ENCODE measurements at regions of chr6 and their contacts with region 1.

Region 1: DNA sequence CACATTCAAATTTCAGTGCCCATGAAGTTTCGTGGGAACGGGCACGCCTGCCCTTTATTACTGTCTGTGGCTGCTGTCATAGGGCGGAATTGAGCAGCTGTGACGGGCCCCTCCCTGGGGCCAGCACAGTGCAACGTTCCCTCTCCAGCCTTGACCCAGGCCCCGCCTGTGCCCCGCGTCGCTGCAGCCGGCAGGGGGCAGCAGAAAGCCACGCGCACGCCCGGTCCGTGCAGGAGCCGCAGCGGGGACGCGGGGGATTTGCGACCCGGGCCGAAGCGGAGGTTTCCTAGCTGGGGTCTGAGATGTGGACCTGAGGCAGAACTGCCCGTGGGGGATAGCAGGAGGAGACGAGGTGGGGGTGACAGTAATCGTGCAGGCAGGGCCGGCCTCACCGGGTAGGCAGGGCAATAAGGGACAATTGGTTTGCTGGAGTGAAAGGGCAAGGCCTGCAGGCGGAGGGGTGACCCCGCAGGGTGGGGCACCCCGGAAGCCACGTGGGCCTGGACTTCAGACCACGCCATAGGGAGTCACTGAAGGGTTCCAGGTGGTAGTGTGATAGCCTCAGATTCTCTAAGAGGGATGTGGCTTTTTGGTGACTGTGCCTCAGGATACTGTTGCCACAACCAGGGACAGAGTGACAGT is 54.4 kb downstream of the SYTL3 start:
- DNase-seq: peak; percentile 81 to 83 (median 82)
- H3K4me3 ChIP-seq: peak overlapping the region; percentile 20 to 63 (median 36)
- H3K4me3 Mint-ChIP-seq: peak overlapping the region; percentile 83 to 93
- H3K27ac ChIP-seq: peak overlapping the region; percentile 15 to 35
- H3K27ac Mint-ChIP-seq: peak overlapping the region; percentile 66 to 93 (median 85)
- H3K4me1 ChIP-seq: peaks cover 9 to 10% of the 10 kb centered on the region in 2 donors
- H3K4me1 Mint-ChIP-seq: peaks cover 18% of the 10 kb centered on the region
- H3K27me3 ChIP-seq: no peaks in the 10 kb centered on the region
- H3K27me3 Mint-ChIP-seq: peaks cover 0 to 3% (median 0%) of the 10 kb centered on the region in 3 donors
- CTCF ChIP-seq: peak; percentile 99

Region 2: GRCh38 chr6:158744986-158745430 is 40.7 kb after region 1 on chr6:
- intact Hi-C with region 1: loop called in 1 of 2 experiments (anchors 5 kb)
- DNase-seq: no peak
- H3K4me3 ChIP-seq: no peak overlapping the region
- H3K4me3 Mint-ChIP-seq: no peak overlapping the region
- H3K27ac ChIP-seq: no peak overlapping the region
- H3K27ac Mint-ChIP-seq: peak overlapping the region in 1 of 7 donors; percentile 1
- H3K4me1 ChIP-seq: no peaks in the 10 kb centered on the region
- H3K4me1 Mint-ChIP-seq: no peaks in the 10 kb centered on the region
- H3K27me3 ChIP-seq: no peaks in the 10 kb centered on the region
- H3K27me3 Mint-ChIP-seq: peaks cover 1 to 4% (median 3%) of the 10 kb centered on the region in 3 donors
- CTCF ChIP-seq: no peak

Region 3: GRCh38 chr6:158758451-158758861 is 54.2 kb after region 1 on chr6:
- intact Hi-C with region 1: loop called in 1 of 2 experiments (anchors 5 kb)
- DNase-seq: no peak
- H3K4me3 ChIP-seq: no peak overlapping the region
- H3K4me3 Mint-ChIP-seq: no peak overlapping the region
- H3K27ac ChIP-seq: no peak overlapping the region
- H3K27ac Mint-ChIP-seq: peak overlapping the region in 1 of 7 donors; percentile 15
- H3K4me1 ChIP-seq: no peaks in the 10 kb centered on the region
- H3K4me1 Mint-ChIP-seq: peaks cover 2% of the 10 kb centered on the region
- H3K27me3 ChIP-seq: no peaks in the 10 kb centered on the region
- H3K27me3 Mint-ChIP-seq: no peaks in the 10 kb centered on the region
- CTCF ChIP-seq: no peak

Region 4: GRCh38 chr6:158769771-158770432 is 65.6 kb after region 1 on chr6:
- intact Hi-C with region 1: loop called in 1 of 2 experiments (anchors 10 kb)
- DNase-seq: no peak
- H3K4me3 ChIP-seq: no peak overlapping the region
- H3K4me3 Mint-ChIP-seq: no peak overlapping the region
- H3K27ac ChIP-seq: peak overlapping the region in 1 of 2 donors; percentile 0
- H3K27ac Mint-ChIP-seq: peak overlapping the region in 3 of 7 donors; percentile 3 to 76 (median 52)
- H3K4me1 ChIP-seq: no peaks in the 10 kb centered on the region
- H3K4me1 Mint-ChIP-seq: peaks cover 3% of the 10 kb centered on the region
- H3K27me3 ChIP-seq: no peaks in the 10 kb centered on the region
- H3K27me3 Mint-ChIP-seq: peaks cover 0 to 2% (median 0%) of the 10 kb centered on the region in 3 donors
- CTCF ChIP-seq: no peak

Region 5: GRCh38 chr6:158972241-158973233 is 268.2 kb after region 1 on chr6:
- intact Hi-C with region 1: loop called (anchors 1 to 5 kb)
- DNase-seq: peak; percentile 29 to 61 (median 42)
- H3K4me3 ChIP-seq: no peak overlapping the region
- H3K4me3 Mint-ChIP-seq: no peak overlapping the region
- H3K27ac ChIP-seq: no peak overlapping the region
- H3K27ac Mint-ChIP-seq: no peak overlapping the region
- H3K4me1 ChIP-seq: peaks cover 2 to 3% of the 10 kb centered on the region in 2 donors
- H3K4me1 Mint-ChIP-seq: peaks cover 4% of the 10 kb centered on the region
- H3K27me3 ChIP-seq: no peaks in the 10 kb centered on the region
- H3K27me3 Mint-ChIP-seq: no peaks in the 10 kb centered on the region
- CTCF ChIP-seq: peak; percentile 79

Region 6: DNA sequence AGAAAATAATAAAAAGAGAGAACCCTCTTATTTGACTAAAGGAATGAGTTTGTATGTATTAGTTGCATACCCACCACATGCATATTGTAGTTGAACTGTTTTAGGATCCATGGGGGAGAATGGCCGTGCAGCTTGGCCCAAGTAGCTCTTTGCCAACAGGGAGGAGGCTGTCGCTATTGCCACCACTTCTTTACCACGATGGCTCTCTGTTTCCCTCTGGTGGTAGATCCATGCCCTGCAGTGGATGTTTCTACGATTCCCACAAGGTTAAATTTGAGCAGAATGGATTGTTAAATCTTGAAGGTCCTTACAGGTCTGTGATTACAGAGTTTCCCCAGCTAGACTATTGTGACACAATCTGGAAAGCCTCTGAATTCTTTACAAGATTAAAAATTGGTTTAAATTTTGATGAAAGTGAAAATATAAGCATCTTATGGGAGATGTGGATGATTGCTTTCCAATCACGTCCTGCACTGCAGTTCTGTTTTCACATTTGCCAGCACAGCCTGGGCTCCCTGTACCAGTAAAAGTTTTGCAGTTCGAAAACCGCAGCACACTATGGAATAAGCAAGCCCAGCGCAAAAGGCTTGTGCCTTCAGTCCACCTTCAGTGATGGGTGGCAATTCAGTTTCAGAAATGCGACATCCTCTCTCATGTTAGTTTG is 430.5 kb after region 1 on chr6:
- intact Hi-C with region 1: loop called in 1 of 2 experiments (anchors 10 kb)
- DNase-seq: peak; percentile 65 to 82 (median 79)
- H3K4me3 ChIP-seq: no peak overlapping the region
- H3K4me3 Mint-ChIP-seq: no peak overlapping the region
- H3K27ac ChIP-seq: no peak overlapping the region
- H3K27ac Mint-ChIP-seq: peak overlapping the region in 1 of 7 donors; percentile 46
- H3K4me1 ChIP-seq: peaks cover 3 to 4% of the 10 kb centered on the region in 2 donors
- H3K4me1 Mint-ChIP-seq: peaks cover 9% of the 10 kb centered on the region
- H3K27me3 ChIP-seq: peaks cover 0 to 2% of the 10 kb centered on the region in 2 donors
- H3K27me3 Mint-ChIP-seq: peaks cover 5 to 11% (median 7%) of the 10 kb centered on the region in 3 donors
- CTCF ChIP-seq: peak; percentile 96